PC-9 (cell line): ENCODE measurements at regions of chr2 and their contacts with region 1.

Region 1: DNA sequence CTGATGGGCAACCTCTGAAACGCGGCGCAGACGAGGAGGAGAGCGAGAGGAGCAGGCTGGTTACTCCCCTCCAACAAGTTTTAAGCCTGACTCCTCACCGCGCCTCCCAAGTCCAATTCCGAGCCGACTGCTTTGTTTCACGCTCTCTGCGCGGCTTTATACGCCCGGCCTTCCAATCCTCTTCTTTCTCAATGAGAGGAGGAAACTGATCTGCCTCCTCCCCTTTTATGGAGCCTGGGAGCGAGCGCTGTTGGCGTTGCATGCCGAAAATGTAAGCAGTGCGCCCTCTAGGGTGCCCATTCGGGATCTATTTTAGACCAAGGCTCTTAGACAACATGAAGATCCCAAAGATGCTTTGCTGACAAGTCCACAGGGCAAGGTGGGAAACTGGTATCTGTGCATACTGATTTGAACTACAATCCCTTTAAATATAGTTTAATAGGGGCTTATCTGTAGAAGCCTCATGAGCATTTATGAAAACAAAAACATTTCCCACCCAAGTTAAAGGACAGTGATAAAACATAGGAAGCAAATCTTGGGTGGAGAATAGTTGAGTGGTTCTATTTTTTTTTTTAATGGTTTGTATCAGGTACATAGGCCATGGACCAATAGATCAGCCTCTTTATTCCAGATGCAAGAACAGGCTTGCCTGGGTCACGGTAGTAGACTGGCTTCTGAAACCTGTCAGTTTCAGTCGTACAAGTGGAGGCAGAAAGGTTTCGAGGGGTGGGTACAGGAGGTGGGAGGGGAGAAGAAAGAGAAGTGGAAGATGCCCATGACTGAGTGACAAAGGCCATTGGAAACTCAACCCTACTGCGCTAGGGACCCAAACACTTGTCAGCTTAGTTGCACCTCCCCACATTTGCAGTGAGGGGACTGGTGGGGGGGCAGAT is at the start of gene RND3:
- DNase-seq: peak; percentile 90 to 96
- H3K4me3 ChIP-seq: peak within 1 kb of the TSS; percentile 93
- H3K27ac ChIP-seq: peak within 1 kb of the TSS; percentile 92
- H3K4me1 ChIP-seq: peaks cover 16% of the 10 kb centered on the region
- H3K27me3 ChIP-seq: no peaks in the 10 kb centered on the region
- CTCF ChIP-seq: peak; percentile 87
- total RNA-seq, gene RND3: 72.9 and 99.1 TPM in 2 replicates

Region 2: GRCh38 chr2:149733936-149734685 is 753.7 kb before region 1 on chr2:
- CTCF ChIA-PET with region 1: no interaction called
- POLR2A ChIA-PET with region 1: no interaction called
- intact Hi-C with region 1: loop called (anchors 10 kb)
- DNase-seq: peak; percentile 45 to 48
- H3K4me3 ChIP-seq: no peak overlapping the region
- H3K27ac ChIP-seq: no peak overlapping the region
- H3K4me1 ChIP-seq: peaks cover 5% of the 10 kb centered on the region; the same call in 1 of the 2 replicates
- H3K27me3 ChIP-seq: no peaks in the 10 kb centered on the region
- CTCF ChIP-seq: no peak

Region 3: DNA sequence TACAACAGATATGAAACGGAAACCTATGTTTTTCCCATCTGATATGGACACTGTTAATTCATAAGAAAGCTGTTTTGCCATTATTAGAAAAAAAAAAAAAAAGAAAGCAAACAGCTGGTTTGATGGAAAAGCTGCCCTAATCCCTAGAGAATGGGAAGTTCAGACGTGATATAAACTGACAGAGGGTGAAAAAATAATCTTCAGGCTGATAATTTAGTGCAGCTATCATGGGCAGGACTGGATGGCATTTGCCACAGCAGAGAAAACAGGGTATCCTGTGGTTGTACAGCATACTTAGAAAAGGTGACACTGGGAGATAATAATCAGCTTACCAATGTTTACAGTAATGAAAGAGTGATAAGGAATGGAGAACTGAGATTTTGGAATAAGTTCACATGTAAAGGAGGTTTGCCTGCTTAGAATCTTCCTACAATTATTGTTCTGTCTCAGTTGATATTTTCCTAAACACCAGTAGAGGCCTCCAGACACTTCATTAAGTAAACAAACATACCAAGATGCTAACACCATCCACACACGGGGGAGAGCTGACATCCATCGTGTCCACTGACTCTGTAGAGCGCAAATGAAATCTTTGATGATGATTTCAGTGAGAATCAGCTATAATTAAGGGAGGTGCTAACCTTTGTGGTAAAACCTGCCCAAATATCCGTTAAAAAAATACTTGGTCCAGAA is 688.6 kb before region 1 on chr2:
- CTCF ChIA-PET with region 1: no interaction called
- POLR2A ChIA-PET with region 1: no interaction called
- intact Hi-C with region 1: loop called (anchors 2 kb)
- DNase-seq: peak in 1 of 2 experiments; percentile 4
- H3K4me3 ChIP-seq: no peak overlapping the region
- H3K27ac ChIP-seq: no peak overlapping the region
- H3K4me1 ChIP-seq: no peaks in the 10 kb centered on the region
- H3K27me3 ChIP-seq: no peaks in the 10 kb centered on the region
- CTCF ChIP-seq: peak; percentile 37; the same call in 1 of the 2 replicates

Region 4: GRCh38 chr2:150610671-150611279 is 123.0 kb after region 1 on chr2:
- CTCF ChIA-PET with region 1: no interaction called
- POLR2A ChIA-PET with region 1: no interaction called
- intact Hi-C with region 1: loop called (anchors 1 kb)
- DNase-seq: peak; percentile 35 to 56
- H3K4me3 ChIP-seq: no peak overlapping the region
- H3K27ac ChIP-seq: no peak overlapping the region
- H3K4me1 ChIP-seq: no peaks in the 10 kb centered on the region
- H3K27me3 ChIP-seq: no peaks in the 10 kb centered on the region
- CTCF ChIP-seq: peak; percentile 66

Region 5: GRCh38 chr2:150911766-150912280 is 424.0 kb after region 1 on chr2:
- CTCF ChIA-PET with region 1: no interaction called
- POLR2A ChIA-PET with region 1: no interaction called
- intact Hi-C with region 1: loop called (anchors 5 kb)
- DNase-seq: peak; percentile 48 to 65
- H3K4me3 ChIP-seq: no peak overlapping the region
- H3K27ac ChIP-seq: peak overlapping the region; percentile 55
- H3K4me1 ChIP-seq: no peaks in the 10 kb centered on the region
- H3K27me3 ChIP-seq: no peaks in the 10 kb centered on the region
- CTCF ChIP-seq: 0 out of 2 replicates have a peak, but pooled peaks have one; percentile 18

Region 6: DNA sequence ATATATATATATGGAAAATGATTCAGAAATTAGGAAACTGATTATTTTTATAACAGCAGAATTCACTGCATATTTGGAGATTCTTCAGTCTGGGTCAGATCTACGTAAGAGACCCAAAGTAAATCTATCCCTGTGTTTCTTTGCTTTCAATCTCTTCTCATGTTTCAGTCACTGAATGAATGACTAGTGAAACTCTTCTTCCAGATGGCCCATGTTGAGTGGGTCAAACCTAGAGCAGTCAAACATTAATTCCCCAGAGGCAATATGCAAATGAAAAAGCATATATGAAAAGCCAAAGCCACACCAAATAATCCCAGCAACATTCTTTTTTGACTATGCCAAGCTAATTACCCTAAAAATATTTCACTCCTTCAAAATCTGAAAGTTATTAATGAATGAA is 456.5 kb after region 1 on chr2:
- CTCF ChIA-PET with region 1: no interaction called
- POLR2A ChIA-PET with region 1: no interaction called
- intact Hi-C with region 1: no loop called
- DNase-seq: no peak
- H3K4me3 ChIP-seq: no peak overlapping the region
- H3K27ac ChIP-seq: no peak overlapping the region
- H3K4me1 ChIP-seq: no peaks in the 10 kb centered on the region
- H3K27me3 ChIP-seq: no peaks in the 10 kb centered on the region
- CTCF ChIP-seq: no peak

Region 7: DNA sequence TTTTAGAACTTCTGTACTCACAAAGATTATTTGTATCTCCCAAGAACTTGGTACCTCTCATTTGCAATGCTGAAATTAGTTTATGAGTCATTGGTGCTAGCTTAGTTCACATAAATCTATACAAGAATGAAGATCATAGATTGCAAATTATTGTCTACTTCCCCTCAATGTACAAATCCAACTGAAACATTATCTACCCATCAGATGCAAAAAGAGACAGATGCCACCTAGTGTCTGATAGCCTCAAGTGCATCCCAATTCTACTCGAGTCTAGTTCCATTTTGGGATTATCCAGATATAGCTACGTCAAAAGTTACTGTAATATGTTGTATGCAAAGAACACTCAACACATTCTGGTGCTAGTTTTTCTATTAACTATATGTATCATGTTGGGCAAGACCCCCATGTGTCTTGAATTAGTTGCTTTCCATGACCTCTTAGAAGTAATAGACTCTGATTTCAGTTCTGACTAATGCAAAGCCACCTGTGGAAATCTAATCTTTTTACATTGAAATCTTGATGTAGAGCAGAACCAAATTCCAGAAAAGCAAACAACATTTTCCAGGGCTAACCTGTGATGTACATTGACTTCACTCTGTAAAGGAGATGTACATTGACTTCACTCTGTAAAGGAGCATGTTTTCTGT is 563.9 kb after region 1 on chr2:
- CTCF ChIA-PET with region 1: no interaction called
- POLR2A ChIA-PET with region 1: no interaction called
- intact Hi-C with region 1: loop called (anchors 1 kb)
- DNase-seq: peak in 1 of 2 experiments; percentile 12
- H3K4me3 ChIP-seq: no peak overlapping the region
- H3K27ac ChIP-seq: no peak overlapping the region
- H3K4me1 ChIP-seq: peaks cover 15% of the 10 kb centered on the region; the same call in 1 of the 2 replicates
- H3K27me3 ChIP-seq: no peaks in the 10 kb centered on the region
- CTCF ChIP-seq: peak; percentile 63

Region 8: GRCh38 chr2:151238527-151239487 is 751.0 kb after region 1 on chr2:
- CTCF ChIA-PET with region 1: no interaction called
- POLR2A ChIA-PET with region 1: no interaction called
- intact Hi-C with region 1: loop called (anchors 2 kb)
- DNase-seq: peak; percentile 43 to 59
- H3K4me3 ChIP-seq: no peak overlapping the region
- H3K27ac ChIP-seq: no peak overlapping the region
- H3K4me1 ChIP-seq: 0 out of 2 replicates have a peak, but pooled peaks cover 4% of the 10 kb centered on the region
- H3K27me3 ChIP-seq: no peaks in the 10 kb centered on the region
- CTCF ChIP-seq: peak; percentile 89